ENCODE measurements at regions of chr10 and their contacts with region 1.

Region 1: DNA sequence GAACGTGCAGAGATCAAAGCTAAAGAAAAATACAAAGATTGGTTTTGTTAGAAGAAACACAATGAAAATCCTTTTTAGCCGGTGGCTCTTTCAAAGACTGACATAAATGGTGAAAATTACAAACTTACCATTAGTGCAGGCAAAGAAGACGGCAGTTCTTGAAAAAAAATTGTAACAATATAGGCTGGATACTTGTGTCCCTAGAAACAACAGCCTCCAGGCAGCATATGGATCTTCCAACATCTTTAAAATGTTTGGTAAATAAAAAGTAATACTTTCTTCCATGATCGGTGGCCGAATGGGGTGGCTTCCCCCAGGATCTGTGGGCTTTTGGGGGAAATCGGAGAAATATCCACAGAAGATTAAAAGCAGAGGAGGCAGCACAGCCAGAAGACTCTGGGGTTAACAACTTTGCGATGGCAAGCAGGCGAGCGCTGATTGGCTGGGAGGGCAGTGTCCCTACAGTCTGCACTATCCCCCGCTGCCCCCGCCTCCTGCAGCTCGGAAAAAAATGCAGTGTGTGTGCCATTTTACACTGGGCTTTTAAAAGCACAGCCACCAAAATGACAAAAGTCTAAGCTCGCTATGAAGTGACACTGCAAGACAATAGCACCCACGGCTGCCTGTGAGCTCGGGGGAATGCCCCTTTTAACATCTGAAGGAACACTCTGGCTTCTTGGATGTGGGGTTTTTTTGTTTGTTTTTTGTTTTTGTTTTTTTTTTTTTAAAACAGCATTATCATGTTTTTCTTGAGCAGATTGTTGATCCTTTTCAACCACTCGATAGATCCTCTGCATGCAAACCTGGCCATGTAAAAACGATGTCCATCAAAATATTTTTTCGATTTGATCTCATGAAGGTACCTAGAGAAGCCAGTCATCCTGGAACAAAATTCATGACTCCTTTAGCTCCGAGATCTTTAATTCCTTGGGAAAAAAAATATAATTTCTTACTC is 31.7 kb upstream of the EPC1 start:
- DNase-seq: peak; percentile 83 to 97 (median 90)
- ATAC-seq: peak; percentile 89
- H3K4me3 ChIP-seq: peak overlapping the region; percentile 79
- H3K4me3 Mint-ChIP-seq: no peak overlapping the region
- H3K27ac ChIP-seq: peak overlapping the region; percentile 61 to 81
- H3K27ac Mint-ChIP-seq: no peak overlapping the region
- H3K4me1 ChIP-seq: no peaks in the 10 kb centered on the region
- H3K4me1 Mint-ChIP-seq: peaks cover 20% of the 10 kb centered on the region
- H3K27me3 ChIP-seq: no peaks in the 10 kb centered on the region
- H3K27me3 Mint-ChIP-seq: no peaks in the 10 kb centered on the region
- CTCF ChIP-seq: no peak

Region 2: GRCh38 chr10:32332299-32332750 is 46.3 kb before region 1 on chr10:
- CTCF ChIA-PET with region 1: interaction called, 4 read pairs
- POLR2A ChIA-PET with region 1: interaction called, 3 read pairs
- intact Hi-C with region 1: loop called in 1 of 2 experiments (anchors 5 kb)
- DNase-seq: peak; percentile 30 to 92 (median 56)
- ATAC-seq: peak; percentile 93
- H3K4me3 ChIP-seq: peak overlapping the region; percentile 2
- H3K4me3 Mint-ChIP-seq: peak overlapping the region; percentile 73
- H3K27ac ChIP-seq: no peak overlapping the region
- H3K27ac Mint-ChIP-seq: peak overlapping the region; percentile 87
- H3K4me1 ChIP-seq: peaks cover 61% of the 10 kb centered on the region
- H3K4me1 Mint-ChIP-seq: peaks cover 96% of the 10 kb centered on the region
- H3K27me3 ChIP-seq: no peaks in the 10 kb centered on the region
- H3K27me3 Mint-ChIP-seq: no peaks in the 10 kb centered on the region
- CTCF ChIP-seq: no peak

Region 3: DNA sequence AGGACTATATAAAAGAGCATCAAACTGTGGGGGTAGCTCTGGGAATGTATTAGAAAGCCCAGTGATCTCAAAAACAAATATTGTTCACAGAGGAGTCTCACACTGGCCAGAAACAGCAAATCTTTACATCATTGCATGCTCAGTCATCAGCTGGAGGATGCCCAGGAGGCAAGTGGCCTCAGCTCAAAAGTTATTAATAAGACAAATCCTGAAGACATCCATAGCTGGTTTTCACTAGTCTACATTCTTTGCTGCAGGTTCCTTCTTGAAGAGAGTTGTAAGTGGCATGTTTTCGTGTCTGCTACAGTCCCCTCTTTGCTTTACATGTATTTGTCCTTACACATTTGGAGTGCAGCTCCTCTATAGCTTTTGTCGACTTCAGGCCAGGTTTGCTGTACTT is 58.7 kb after region 1 on chr10:
- CTCF ChIA-PET with region 1: no interaction called
- POLR2A ChIA-PET with region 1: interaction called, 12 read pairs
- intact Hi-C with region 1: no loop called
- DNase-seq: no peak
- ATAC-seq: no peak
- H3K4me3 ChIP-seq: no peak overlapping the region
- H3K4me3 Mint-ChIP-seq: no peak overlapping the region
- H3K27ac ChIP-seq: no peak overlapping the region
- H3K27ac Mint-ChIP-seq: no peak overlapping the region
- H3K4me1 ChIP-seq: no peaks in the 10 kb centered on the region
- H3K4me1 Mint-ChIP-seq: peaks cover 21% of the 10 kb centered on the region
- H3K27me3 ChIP-seq: no peaks in the 10 kb centered on the region
- H3K27me3 Mint-ChIP-seq: no peaks in the 10 kb centered on the region
- CTCF ChIP-seq: no peak

Region 4: DNA sequence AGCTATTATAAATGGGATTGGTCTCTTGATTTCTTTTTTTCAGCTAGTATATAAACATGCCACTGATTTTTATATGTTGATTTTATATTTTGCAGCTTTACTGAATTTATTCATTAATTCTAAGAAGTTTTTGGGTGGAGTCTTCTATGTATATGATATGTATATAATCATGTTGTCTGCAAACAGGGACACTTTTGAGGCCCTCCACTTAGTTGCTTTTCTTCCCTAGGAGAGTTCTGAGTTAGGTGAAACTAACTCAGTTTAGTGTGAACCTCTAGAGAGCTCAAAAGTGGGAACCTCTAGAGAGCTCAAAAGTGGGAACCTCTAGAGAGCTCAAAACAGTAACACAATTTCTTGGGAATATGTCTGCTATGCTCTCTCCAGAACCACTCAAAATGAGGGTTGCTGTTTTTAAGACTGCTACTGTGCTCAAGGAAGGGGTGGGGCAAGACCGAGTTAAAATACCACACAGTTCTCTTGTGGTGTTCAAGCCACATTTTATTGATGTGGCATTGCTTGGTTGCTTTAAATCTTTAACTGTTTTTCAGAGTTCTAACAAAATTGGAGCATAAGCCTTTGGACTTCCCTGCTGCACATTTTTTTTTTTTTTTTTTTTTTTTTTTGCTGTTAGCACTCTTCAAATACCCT is 80.5 kb after region 1 on chr10:
- CTCF ChIA-PET with region 1: no interaction called
- POLR2A ChIA-PET with region 1: interaction called, 24 read pairs
- intact Hi-C with region 1: loop called in 1 of 2 experiments (anchors 1 kb)
- DNase-seq: peak in 13 of 14 experiments; percentile 23 to 90 (median 43)
- ATAC-seq: peak; percentile 99
- H3K4me3 ChIP-seq: peak overlapping the region; percentile 9
- H3K4me3 Mint-ChIP-seq: peak overlapping the region; percentile 85
- H3K27ac ChIP-seq: no peak overlapping the region
- H3K27ac Mint-ChIP-seq: peak overlapping the region; percentile 95
- H3K4me1 ChIP-seq: peaks cover 11% of the 10 kb centered on the region
- H3K4me1 Mint-ChIP-seq: peaks cover 60% of the 10 kb centered on the region
- H3K27me3 ChIP-seq: no peaks in the 10 kb centered on the region
- H3K27me3 Mint-ChIP-seq: no peaks in the 10 kb centered on the region
- CTCF ChIP-seq: no peak

Region 5: DNA sequence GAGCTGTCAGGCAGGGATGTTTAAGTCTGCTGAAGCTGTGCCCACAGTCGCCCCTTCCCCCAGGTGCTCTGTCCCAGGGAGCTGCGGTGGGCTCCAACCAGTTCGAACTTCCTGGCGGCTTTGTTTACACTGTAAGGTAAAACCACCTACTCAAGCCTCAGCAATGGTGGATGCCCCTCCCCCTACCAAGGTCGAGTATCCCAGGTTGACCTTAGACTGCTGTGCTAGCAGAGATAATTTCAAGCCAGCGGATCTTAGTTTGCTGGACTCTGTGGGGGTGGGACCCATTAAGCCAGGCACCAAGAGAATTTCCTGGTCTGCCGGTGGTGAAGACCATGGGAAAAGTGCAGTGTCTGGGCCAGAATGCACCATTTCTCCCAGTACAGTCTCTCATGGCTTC is 123.3 kb after region 1 on chr10:
- CTCF ChIA-PET with region 1: no interaction called
- POLR2A ChIA-PET with region 1: no interaction called
- intact Hi-C with region 1: no loop called
- DNase-seq: no peak
- ATAC-seq: no peak
- H3K4me3 ChIP-seq: no peak overlapping the region
- H3K4me3 Mint-ChIP-seq: no peak overlapping the region
- H3K27ac ChIP-seq: no peak overlapping the region
- H3K27ac Mint-ChIP-seq: no peak overlapping the region
- H3K4me1 ChIP-seq: no peaks in the 10 kb centered on the region
- H3K4me1 Mint-ChIP-seq: peaks cover 18% of the 10 kb centered on the region
- H3K27me3 ChIP-seq: no peaks in the 10 kb centered on the region
- H3K27me3 Mint-ChIP-seq: no peaks in the 10 kb centered on the region
- CTCF ChIP-seq: no peak

Measured in CD4-positive, alpha-beta T cell (primary cell).